ENCODE measurements at regions of chr5 and their contacts with region 1.

Region 1: DNA sequence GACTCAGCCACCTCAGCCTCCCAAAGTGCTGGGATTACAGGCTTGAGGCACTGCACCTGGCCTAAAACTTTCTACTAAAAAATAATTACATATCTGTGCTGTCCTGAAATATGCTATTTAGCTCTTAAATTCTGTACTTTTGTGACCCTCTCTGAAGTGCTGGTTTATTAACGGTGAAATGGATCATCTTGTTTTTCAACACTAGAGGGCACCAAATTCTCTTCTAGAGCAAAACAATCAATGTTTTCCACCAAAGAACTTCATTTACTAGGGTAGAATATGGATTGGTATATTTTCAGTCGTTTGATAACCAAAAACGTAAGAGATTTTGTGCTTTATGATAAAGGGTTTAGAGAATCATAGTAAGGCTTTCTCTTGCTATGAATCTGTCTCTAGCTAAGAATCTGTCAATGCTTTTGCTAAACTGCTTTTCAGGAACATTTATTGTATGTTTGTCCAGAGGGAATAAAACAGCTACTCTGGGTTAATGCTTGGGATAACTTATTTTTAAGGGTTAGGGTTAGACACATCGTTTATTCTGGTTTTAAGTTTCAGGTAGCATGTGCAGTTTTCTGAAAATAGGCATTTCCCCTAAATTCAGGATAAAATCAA is 63.6 kb downstream of the RNF180 start:
- DNase-seq: no peak
- H3K4me3 ChIP-seq: no peak overlapping the region
- H3K27ac ChIP-seq: no peak overlapping the region
- H3K4me1 ChIP-seq: peaks cover 0 to 5% of the 10 kb centered on the region in 2 donors
- H3K27me3 ChIP-seq: no peaks in the 10 kb centered on the region
- CTCF ChIP-seq: peak; percentile 55 to 80 (median 72)
- POLR2A ChIP-seq: no peak

Region 2: DNA sequence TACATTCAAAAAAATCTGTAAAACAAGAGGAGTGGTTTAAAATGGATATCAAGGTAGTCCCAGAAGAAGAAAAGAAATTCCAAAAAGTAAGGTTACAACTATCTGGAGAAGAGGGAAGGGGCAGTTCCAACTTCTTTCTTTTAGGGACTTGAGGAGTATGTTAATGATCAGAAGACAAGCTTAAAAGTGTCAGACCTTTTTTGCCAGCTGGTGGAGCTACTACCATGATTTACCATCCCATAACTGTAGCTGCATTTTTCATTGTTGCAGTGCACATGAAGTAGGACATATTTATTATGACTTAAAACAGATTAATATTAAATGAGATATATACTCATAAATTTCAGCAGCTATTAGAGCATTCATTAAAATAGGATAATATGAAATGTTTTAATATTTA is 118.0 kb after region 1 on chr5:
- intact Hi-C with region 1: no loop called
- DNase-seq: peak in 1 of 7 donors; percentile 20
- H3K4me3 ChIP-seq: no peak overlapping the region
- H3K27ac ChIP-seq: no peak overlapping the region
- H3K4me1 ChIP-seq: peaks cover 10 to 32% of the 10 kb centered on the region in 2 donors
- H3K27me3 ChIP-seq: no peaks in the 10 kb centered on the region
- CTCF ChIP-seq: peak in 3 of 6 experiments; percentile 9 to 30 (median 29)
- POLR2A ChIP-seq: no peak

Region 3: GRCh38 chr5:64619609-64620008 is 390.3 kb after region 1 on chr5:
- intact Hi-C with region 1: loop called (anchors 5 kb)
- DNase-seq: no peak
- H3K4me3 ChIP-seq: no peak overlapping the region
- H3K27ac ChIP-seq: no peak overlapping the region
- H3K4me1 ChIP-seq: no peaks in the 10 kb centered on the region
- H3K27me3 ChIP-seq: no peaks in the 10 kb centered on the region
- CTCF ChIP-seq: no peak
- POLR2A ChIP-seq: no peak